Right ventricle myocardium inferior (tissue), 1 donor: ENCODE measurements at regions of chr2 and their contacts with region 1.

Region 1: DNA sequence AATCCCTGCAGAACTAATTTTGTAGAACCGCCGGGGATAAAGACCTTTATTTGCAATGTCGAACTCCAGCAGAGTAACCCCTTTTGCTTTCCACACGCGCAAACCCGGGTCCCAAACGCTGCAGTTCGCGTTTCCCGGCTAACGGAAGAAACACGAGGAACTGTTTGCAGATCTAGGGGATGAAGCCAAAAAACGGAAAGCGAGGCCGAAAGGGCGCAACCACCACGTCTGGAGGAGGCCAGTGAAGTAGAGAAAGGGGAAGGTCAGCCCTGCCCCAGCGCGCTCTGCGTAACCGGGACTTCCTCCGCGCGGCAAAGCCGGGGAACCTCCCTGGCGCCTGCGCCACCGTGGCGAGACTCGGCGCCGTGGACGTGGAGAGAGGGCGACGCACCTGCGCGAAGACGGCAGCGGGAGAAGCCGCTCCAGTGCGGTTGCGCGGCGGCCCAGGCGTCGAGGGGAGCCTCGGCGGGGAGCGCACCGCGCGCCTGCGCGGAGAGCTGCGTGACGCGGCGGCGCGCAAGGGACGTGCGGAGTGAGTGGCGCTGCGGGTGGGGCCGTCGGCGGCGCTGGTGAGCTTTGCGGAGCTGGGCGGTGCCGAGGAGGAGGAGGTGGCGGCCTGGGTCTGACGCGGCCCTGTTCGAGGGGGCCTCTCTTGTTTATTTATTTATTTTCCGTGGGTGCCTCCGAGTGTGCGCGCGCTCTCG is at the start of gene PPP1CB:
- DNase-seq: peak; percentile 98
- ATAC-seq: peak; percentile 96
- total RNA-seq, gene PPP1CB: 397 TPM

Region 2: GRCh38 chr2:28594289-28595108 is 156.9 kb before region 1 on chr2:
- intact Hi-C with region 1: loop called (anchors 1 kb)
- DNase-seq: peak; percentile 94
- ATAC-seq: peak; percentile 75

Region 3: DNA sequence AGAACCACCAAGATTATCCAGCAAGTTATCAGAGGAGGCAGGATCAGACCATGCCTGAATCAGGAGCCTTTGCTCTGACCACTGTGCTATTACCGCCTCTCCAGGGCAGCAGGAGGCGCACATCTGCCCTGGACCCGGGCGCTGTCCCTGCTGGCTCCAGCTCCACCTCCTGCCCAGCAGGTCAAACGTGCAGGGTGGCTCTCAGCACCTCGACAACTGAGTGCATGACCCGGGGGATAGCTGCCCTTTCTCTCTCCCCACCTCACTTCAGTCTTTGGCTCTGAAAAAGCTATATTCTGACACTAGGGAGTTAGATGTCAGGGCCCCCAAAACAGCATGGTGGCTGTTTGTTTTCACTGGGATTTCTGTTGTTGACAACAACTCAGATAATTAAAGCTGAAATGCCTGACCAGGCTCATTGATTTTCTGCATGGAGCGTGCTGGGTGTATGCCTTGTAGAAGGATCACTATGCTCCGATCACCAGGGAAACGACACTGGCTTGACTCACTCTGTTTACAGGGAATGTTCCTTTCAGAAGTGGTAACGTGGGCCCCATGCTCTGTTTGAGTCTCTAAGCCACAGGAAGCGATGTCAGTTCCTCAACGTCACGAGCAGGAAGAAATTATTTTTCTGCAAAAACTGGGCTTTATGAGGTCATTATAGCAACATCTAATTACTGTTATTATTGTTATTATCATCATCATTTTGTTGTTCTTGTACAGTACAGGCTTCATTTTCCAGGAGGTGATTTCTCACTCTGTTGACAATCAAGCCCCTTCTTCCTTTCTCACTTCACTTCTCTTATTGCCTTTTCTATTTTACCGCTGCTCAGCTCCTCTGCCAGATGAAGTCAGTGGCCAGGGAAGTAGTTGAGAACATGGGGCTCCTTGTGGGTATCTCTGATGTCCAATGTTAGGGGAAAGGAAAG is 130.0 kb before region 1 on chr2:
- intact Hi-C with region 1: loop called (anchors 5 kb)
- DNase-seq: no peak
- ATAC-seq: peak; percentile 67

Region 4: GRCh38 chr2:28661589-28662001 is 89.8 kb before region 1 on chr2:
- intact Hi-C with region 1: loop called (anchors 2 kb)
- DNase-seq: no peak
- ATAC-seq: peak; percentile 68

Region 5: DNA sequence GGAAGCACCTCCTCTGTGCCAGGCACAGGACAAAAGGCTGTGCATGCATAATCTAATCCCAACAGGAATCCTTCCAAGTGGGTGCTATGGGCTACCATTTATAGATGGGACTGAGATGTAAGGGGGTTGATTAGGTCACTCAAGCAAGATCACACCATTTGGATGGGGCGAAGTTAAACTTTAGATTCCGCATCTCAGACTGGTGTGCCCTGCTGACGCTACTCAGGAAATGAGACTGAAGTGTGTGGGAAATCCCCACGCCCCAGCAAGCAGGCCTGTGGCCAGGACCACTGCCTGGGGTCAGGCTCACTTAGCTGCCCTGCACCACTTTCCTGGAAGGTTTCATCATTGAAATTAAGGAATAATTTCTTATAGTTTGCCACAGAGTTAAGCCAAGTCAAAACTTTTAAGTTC is 70.2 kb before region 1 on chr2:
- intact Hi-C with region 1: loop called (anchors 5 kb)
- DNase-seq: no peak
- ATAC-seq: no peak

Region 6: DNA sequence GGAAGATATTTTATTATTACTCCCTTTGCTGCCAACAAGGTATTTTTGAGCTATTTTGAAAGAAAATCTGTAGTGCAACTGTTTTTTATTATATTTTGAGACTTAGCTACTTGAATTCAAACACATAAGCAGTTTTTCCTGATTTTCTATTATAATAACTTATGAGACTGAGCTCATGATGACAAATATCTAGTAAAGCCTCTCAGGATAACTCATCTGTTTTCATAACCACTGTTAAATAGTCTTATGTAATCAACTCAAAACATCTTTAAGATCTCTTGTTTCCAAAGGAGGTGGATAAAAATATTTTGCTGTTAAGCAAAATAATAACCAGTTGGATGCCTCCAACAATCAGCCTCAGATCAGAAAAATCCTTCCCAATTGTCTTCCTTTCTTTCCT is 21.7 kb before region 1 on chr2:
- intact Hi-C with region 1: no loop called
- DNase-seq: no peak
- ATAC-seq: no peak

Region 7: GRCh38 chr2:28796620-28797019 is 45.2 kb after region 1 on chr2:
- intact Hi-C with region 1: no loop called
- DNase-seq: no peak
- ATAC-seq: no peak